Mammary epithelial cell (primary cell): ENCODE measurements at regions of chr2 and their contacts with region 1.

Region 1: DNA sequence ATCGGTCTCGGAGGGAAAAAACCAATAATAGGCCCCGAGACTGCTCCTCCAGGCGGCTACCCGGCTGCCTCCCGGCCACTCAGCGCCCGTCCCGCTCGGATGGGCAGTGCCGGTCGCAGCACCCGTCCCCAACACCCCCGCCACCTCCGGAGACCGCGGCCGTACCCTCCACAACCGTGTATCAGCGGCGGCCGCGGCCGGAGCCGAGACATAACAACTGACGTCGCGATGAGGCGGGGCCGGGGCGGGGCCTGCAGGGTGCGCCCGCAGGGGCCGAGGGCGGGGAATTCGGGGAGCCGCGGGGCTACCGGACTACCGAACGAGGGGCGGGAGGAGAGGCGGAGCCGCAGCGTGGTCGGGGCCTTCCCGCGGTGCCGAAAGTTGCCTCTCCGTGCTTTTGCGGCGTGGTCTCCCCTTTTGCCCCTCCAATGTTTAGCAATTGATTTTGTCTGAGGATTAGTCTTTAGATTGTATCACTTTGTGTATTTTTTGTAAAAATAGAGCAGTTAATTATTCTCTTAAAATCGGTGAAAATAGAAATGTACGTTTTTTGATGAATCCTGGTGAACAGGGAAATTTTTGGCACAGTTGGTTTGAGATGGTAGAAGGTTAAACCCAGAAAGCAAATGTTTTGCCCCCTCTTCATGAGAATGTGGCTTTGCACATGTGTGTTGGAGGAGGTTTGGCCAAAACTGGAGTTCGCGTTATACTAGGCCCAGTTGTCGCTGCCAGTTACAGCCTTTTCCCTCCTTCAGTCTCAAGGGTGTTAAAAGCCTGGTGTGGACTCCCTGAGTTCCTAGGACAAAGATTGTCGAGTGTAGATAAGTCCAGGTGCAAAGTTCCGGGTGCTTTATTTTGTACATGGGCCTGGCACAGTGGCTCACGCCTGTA is at the start of gene RNF103:
- DNase-seq: peak; percentile 91
- H3K4me3 ChIP-seq: peak within 1 kb of the TSS; percentile 68 to 92 (median 74)
- H3K27ac ChIP-seq: peak within 1 kb of the TSS; percentile 90
- H3K4me1 ChIP-seq: no peaks in the 10 kb centered on the region
- H3K27me3 ChIP-seq: no peaks in the 10 kb centered on the region
- CTCF ChIP-seq: no peak
- total RNA-seq, gene RNF103: 18.1 to 27.3 TPM

Region 2: DNA sequence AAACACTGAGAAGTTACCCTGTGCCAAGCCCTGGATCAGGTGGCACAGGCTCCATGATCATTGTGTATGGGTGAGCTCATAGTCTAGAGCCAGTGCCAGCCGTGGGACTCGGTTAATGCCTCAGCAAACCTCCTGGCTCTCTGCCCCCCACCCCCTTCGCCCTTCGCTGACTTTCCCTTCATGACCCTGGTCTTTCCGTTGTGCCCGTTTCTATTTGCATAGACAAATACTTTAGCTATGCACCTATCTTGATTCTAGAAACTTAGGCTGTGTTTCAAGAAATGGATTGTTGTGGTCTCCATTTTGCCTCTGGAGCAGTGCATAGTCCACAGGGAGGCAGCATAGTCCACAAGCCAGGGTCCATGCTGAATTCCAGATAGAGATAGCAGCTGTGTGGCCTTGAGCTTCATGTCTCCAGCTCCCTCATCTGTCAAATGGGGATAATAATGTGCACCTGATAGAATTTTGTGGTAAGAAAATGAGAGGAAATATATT is 227.6 kb before region 1 on chr2:
- CTCF ChIA-PET with region 1: no interaction called
- dilution Hi-C with region 1: no loop called
- in situ Hi-C with region 1: no loop called
- intact Hi-C with region 1: loop called (anchors 5 kb)
- DNase-seq: peak; percentile 30
- H3K4me3 ChIP-seq: no peak overlapping the region
- H3K27ac ChIP-seq: no peak overlapping the region
- H3K4me1 ChIP-seq: peaks cover 13% of the 10 kb centered on the region
- H3K27me3 ChIP-seq: no peaks in the 10 kb centered on the region
- CTCF ChIP-seq: peak; percentile 66 to 86

Region 3: DNA sequence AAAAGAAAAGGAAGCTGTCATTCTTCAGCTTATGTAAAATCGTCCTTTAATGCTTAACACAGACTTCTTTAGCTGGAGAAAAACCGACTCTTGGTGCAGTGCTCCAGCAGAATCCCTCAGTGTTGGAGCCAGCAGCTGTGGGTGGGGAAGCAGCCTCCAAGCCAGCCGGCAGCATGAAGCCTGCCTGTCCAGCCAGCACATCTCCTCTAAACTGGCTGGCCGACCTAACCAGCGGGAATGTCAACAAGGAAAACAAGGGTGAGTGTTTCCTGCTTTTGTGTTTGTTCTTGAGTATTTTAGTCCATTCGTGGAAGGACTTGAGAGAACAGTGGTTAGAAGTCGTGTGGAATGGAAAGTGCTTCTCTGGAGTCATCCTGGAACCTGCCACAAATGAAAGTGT is 143.8 kb before region 1 on chr2:
- CTCF ChIA-PET with region 1: no interaction called
- dilution Hi-C with region 1: no loop called
- in situ Hi-C with region 1: loop called in 1 of 2 experiments (anchors 25 kb)
- intact Hi-C with region 1: no loop called
- DNase-seq: no peak
- H3K4me3 ChIP-seq: no peak overlapping the region
- H3K27ac ChIP-seq: no peak overlapping the region
- H3K4me1 ChIP-seq: peaks cover 8% of the 10 kb centered on the region
- H3K27me3 ChIP-seq: no peaks in the 10 kb centered on the region
- CTCF ChIP-seq: no peak

Region 4: GRCh38 chr2:86518481-86518880 is 105.4 kb before region 1 on chr2:
- CTCF ChIA-PET with region 1: interaction called, 10 read pairs
- dilution Hi-C with region 1: no loop called
- in situ Hi-C with region 1: no loop called
- intact Hi-C with region 1: loop called (anchors 5 kb)
- DNase-seq: peak; percentile 9
- H3K4me3 ChIP-seq: no peak overlapping the region
- H3K27ac ChIP-seq: no peak overlapping the region
- H3K4me1 ChIP-seq: no peaks in the 10 kb centered on the region
- H3K27me3 ChIP-seq: no peaks in the 10 kb centered on the region
- CTCF ChIP-seq: peak; percentile 38 to 57

Region 5: GRCh38 chr2:86636842-86637241 is 12.9 kb after region 1 on chr2:
- CTCF ChIA-PET with region 1: no interaction called
- dilution Hi-C with region 1: no loop called
- in situ Hi-C with region 1: no loop called
- intact Hi-C with region 1: no loop called
- DNase-seq: no peak
- H3K4me3 ChIP-seq: no peak overlapping the region
- H3K27ac ChIP-seq: no peak overlapping the region
- H3K4me1 ChIP-seq: no peaks in the 10 kb centered on the region
- H3K27me3 ChIP-seq: no peaks in the 10 kb centered on the region
- CTCF ChIP-seq: no peak

Region 6: GRCh38 chr2:86704459-86704971 is 80.6 kb after region 1 on chr2:
- CTCF ChIA-PET with region 1: no interaction called
- dilution Hi-C with region 1: no loop called
- in situ Hi-C with region 1: no loop called
- intact Hi-C with region 1: loop called (anchors 5 kb)
- DNase-seq: peak; percentile 82
- H3K4me3 ChIP-seq: peak overlapping the region in 2 of 3 experiments; percentile 14 to 15
- H3K27ac ChIP-seq: peak overlapping the region; percentile 83
- H3K4me1 ChIP-seq: peaks cover 23% of the 10 kb centered on the region
- H3K27me3 ChIP-seq: no peaks in the 10 kb centered on the region
- CTCF ChIP-seq: no peak

Region 7: GRCh38 chr2:86808315-86809161 is 184.6 kb after region 1 on chr2:
- CTCF ChIA-PET with region 1: no interaction called
- dilution Hi-C with region 1: no loop called
- in situ Hi-C with region 1: no loop called
- intact Hi-C with region 1: loop called (anchors 5 kb)
- DNase-seq: peak; percentile 84
- H3K4me3 ChIP-seq: peak overlapping the region; percentile 60 to 63 (median 62)
- H3K27ac ChIP-seq: peak overlapping the region; percentile 11
- H3K4me1 ChIP-seq: peaks cover 16% of the 10 kb centered on the region
- H3K27me3 ChIP-seq: no peaks in the 10 kb centered on the region
- CTCF ChIP-seq: peak; percentile 88 to 93